T-cell (primary cell): ENCODE measurements at regions of chr4 and their contacts with region 1.

Region 1: DNA sequence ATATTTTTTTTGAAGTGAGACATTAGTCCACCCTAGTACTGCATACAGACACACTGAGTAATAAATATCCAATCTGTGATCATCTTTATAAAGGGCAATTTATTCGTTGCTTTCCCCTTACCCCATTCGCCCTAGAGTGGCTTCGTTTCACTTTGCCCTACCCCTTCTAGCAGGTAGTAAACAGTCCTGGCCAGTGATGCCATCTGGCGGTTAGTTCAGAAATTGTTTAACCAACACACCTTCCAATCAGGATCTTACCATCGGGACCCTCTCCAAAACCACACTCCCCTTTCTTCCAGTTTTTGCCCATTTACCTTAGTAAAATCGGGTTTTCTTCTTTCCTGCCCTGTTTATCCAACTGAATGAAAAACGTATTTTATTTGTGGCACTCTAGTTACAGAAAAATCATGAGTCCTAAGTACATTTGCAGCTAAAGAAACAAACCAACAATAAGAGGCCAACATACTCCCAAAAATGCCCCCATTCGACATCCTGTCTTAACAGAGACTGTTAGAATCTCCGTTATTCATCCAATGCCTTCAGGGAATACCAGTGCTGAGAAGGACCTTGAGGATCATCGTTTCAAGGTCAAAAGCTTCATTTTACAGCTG is 2.2 kb downstream of the PPA2 start:
- DNase-seq: peak; percentile 5 to 86 (median 61)
- ATAC-seq: peak; percentile 31 to 43 (median 37)
- H3K4me3 ChIP-seq: no peak overlapping the region
- H3K4me3 Mint-ChIP-seq: peak overlapping the region; percentile 60 to 99 (median 99)
- H3K27ac ChIP-seq: peak overlapping the region; percentile 17
- H3K27ac Mint-ChIP-seq: peak overlapping the region; percentile 13 to 34
- H3K4me1 ChIP-seq: peaks cover 8 to 20% of the 10 kb centered on the region in 2 experiments
- H3K4me1 Mint-ChIP-seq: peaks cover 60 to 75% (median 60%) of the 10 kb centered on the region in 3 donors
- H3K27me3 ChIP-seq: no peaks in the 10 kb centered on the region
- H3K27me3 Mint-ChIP-seq: no peaks in the 10 kb centered on the region

Region 2: GRCh38 chr4:105140684-105141490 is 330.8 kb before region 1 on chr4:
- CTCF ChIA-PET with region 1: interaction called, 3 to 21 read pairs
- POLR2A ChIA-PET with region 1: no interaction called
- DNase-seq: peak in 25 of 35 experiments; percentile 5 to 78 (median 26)
- ATAC-seq: peak; percentile 61 to 69 (median 64)
- H3K4me3 ChIP-seq: no peak overlapping the region
- H3K4me3 Mint-ChIP-seq: no peak overlapping the region
- H3K27ac ChIP-seq: no peak overlapping the region
- H3K27ac Mint-ChIP-seq: no peak overlapping the region
- H3K4me1 ChIP-seq: peaks cover 3 to 5% of the 10 kb centered on the region in 2 experiments
- H3K4me1 Mint-ChIP-seq: peaks cover 11 to 15% (median 13%) of the 10 kb centered on the region in 3 donors
- H3K27me3 ChIP-seq: no peaks in the 10 kb centered on the region
- H3K27me3 Mint-ChIP-seq: no peaks in the 10 kb centered on the region